ENCODE measurements at regions of chr11 and their contacts with region 1.

Region 1: GRCh38 chr11:9972989-9973388 is 309.1 kb downstream of the SWAP70 start:
- DNase-seq: peak in 1 of 2 donors; percentile 79
- H3K4me3 ChIP-seq: no peak overlapping the region
- H3K27ac ChIP-seq: no peak overlapping the region
- H3K4me1 ChIP-seq: peaks cover 0 to 9% (median 2%) of the 10 kb centered on the region in 4 donors
- H3K27me3 ChIP-seq: no peaks in the 10 kb centered on the region
- CTCF ChIP-seq: peak in 5 of 7 experiments; percentile 26 to 63 (median 62)
- EP300 ChIP-seq: no peak
- POLR2A ChIP-seq: no peak

Region 2: DNA sequence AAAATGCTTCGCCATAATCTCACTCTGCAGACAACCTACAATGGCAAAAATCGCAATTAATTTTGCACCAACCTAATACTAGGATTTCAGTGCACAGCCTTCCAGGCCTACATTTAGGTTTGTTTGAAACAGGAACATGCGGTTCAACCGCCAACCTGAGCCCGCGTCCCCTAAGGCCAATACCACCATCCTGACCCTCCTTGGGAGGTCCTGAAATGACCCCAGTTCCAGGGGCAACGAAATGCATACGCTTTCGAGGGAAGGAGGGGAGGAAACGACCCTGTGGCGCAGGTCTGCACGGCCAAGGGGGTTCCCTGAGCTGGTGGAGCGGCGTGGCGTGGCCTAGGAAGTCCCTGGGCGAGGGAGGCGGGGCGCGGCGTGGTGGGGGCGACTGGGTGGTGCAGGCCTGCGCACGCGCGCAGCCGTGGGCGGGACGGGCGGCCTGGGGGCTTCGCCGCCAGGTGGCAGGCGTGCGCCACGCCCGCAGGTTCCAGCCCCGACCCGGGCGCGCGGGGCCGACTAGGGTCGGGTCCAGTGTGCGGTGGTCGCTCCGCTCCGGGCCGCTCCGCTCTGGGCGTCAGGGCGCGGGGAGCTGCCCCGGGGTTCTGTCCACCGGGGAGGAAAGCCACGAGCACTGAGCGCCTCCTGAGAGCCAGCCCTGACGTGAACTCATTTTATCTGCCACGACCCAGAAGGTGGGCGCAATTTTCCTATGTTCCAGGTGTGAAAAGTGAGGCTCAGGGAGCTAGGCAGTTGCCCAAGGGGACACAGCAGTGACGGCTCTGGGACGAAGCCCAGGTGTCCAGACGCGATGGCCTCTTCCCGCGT is 215.0 kb before region 1 on chr11:
- intact Hi-C with region 1: loop called (anchors 10 kb)
- DNase-seq: peak; percentile 88 to 95
- H3K4me3 ChIP-seq: peak overlapping the region; percentile 61 to 80 (median 76)
- H3K27ac ChIP-seq: peak overlapping the region; percentile 68 to 92 (median 90)
- H3K4me1 ChIP-seq: peaks cover 23 to 52% (median 33%) of the 10 kb centered on the region in 4 donors
- H3K27me3 ChIP-seq: no peaks in the 10 kb centered on the region
- CTCF ChIP-seq: peak in 3 of 7 experiments; percentile 84 to 96 (median 91)
- EP300 ChIP-seq: no peak
- POLR2A ChIP-seq: no peak

Region 3: DNA sequence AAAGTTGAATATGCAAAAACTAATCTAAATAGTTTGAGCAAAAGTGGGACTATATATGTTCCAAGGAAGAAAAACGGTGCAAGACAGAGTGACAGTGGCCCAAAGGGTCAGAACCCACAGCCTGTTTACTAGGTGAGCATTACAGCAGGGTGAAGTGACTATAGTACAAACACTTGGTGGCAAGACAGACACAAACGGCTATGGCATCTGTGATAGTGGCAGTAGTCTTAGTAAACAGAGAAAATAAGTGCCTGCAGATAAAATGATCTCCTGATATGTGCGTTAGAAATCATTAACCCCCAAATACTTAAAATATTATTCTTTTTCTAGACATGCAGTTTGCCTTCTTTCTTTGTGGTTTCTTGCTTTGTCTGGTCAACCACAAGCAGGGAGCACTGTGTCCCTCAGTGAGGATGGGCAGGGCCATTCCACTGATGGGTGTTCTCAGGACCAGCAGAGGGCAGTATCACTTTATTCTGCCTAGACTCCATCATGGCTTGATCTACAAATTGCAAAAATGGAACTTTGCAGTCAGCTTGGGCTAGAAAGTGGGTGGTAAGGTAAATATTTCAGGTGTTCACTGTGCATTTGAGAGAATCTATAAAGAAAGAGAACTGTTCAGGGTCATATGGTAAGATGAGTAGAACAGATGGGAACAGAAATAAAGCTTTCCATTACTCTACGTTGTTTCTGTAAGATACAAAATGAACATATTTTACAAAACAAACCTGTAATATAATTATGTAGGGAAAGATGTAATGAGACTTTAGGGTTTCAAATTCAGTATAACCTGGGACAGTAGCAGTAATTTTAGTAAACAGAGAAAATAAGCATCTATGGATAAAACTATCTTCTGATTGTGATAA is 110.9 kb before region 1 on chr11:
- intact Hi-C with region 1: loop called (anchors 5 kb)
- DNase-seq: peak; percentile 47 to 72
- H3K4me3 ChIP-seq: no peak overlapping the region
- H3K27ac ChIP-seq: no peak overlapping the region
- H3K4me1 ChIP-seq: peaks cover 0 to 26% (median 16%) of the 10 kb centered on the region in 4 donors
- H3K27me3 ChIP-seq: no peaks in the 10 kb centered on the region
- CTCF ChIP-seq: peak in 5 of 7 experiments; percentile 27 to 63 (median 53)
- EP300 ChIP-seq: no peak
- POLR2A ChIP-seq: no peak